ENCODE measurements at regions of chr10 and their contacts with region 1.

Region 1: GRCh38 chr10:80046629-80047441 is 31.6 kb upstream of the TMEM254 start:
- DNase-seq: peak; percentile 70
- H3K4me3 ChIP-seq: no peak overlapping the region
- H3K27ac ChIP-seq: no peak overlapping the region
- H3K4me1 ChIP-seq: no peaks in the 10 kb centered on the region
- H3K27me3 ChIP-seq: peaks cover 7 to 12% of the 10 kb centered on the region in 2 experiments
- CTCF ChIP-seq: peak; percentile 89 to 92
- POLR2A ChIP-seq: no peak

Region 2: DNA sequence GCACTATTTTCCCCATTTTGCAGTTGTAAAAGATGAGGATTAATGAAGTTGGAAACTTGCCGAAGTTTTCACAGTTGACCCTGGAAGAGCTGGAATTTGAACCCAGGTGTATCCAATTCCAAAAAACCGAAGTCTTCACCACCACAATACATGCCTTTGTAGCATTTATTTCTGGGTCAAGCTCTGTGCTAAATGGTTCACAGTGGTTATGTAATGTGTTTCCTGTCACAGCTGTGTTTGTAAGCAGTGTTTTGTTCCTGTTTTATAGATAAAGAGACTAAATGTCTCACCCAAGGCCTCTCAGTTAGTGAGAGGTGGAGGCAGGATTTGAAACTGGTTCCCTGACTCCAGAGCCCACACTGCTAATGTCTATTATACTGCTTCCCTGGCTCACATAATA is 504.2 kb before region 1 on chr10:
- CTCF ChIA-PET with region 1: interaction called, 45 read pairs
- POLR2A ChIA-PET with region 1: no interaction called
- dilution Hi-C with region 1: no loop called
- intact Hi-C with region 1: loop called (anchors 2 kb)
- DNase-seq: no peak
- H3K4me3 ChIP-seq: no peak overlapping the region
- H3K27ac ChIP-seq: no peak overlapping the region
- H3K4me1 ChIP-seq: no peaks in the 10 kb centered on the region
- H3K27me3 ChIP-seq: no peaks in the 10 kb centered on the region
- CTCF ChIP-seq: no peak
- POLR2A ChIP-seq: no peak

Region 3: GRCh38 chr10:79562135-79562756 is 484.6 kb before region 1 on chr10:
- CTCF ChIA-PET with region 1: interaction called, 6 read pairs
- POLR2A ChIA-PET with region 1: no interaction called
- dilution Hi-C with region 1: no loop called
- intact Hi-C with region 1: loop called (anchors 1 kb)
- DNase-seq: peak; percentile 56
- H3K4me3 ChIP-seq: no peak overlapping the region
- H3K27ac ChIP-seq: no peak overlapping the region
- H3K4me1 ChIP-seq: no peaks in the 10 kb centered on the region
- H3K27me3 ChIP-seq: peaks cover 0 to 9% of the 10 kb centered on the region in 2 experiments
- CTCF ChIP-seq: peak; percentile 81 to 93
- POLR2A ChIP-seq: no peak